PC-9 (cell line): ENCODE measurements at regions of chr11 and their contacts with region 1.

Region 1: DNA sequence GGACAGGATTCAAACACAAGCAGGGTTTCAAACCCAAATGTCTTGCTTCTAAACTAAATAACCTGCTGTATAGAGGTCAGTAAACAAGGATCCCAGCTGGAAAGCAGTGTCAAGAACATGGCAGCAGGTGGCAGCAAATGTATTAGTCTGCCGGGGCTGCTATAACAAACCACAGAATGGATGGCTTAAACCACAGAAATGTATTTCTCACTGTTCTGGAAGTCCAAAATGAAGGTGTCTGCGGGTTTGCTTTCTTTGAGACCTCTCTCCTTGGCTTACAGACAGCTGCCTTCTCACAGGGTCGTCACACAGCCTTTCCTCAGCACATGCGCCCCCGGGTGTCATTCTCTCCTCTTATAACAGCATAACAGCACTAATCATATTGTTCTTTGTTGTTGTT is 65.1 kb upstream of the LRRC55 start:
- DNase-seq: peak; percentile 34 to 65
- H3K4me3 ChIP-seq: no peak overlapping the region
- H3K27ac ChIP-seq: no peak overlapping the region
- H3K4me1 ChIP-seq: peaks cover 8% of the 10 kb centered on the region
- H3K27me3 ChIP-seq: no peaks in the 10 kb centered on the region
- CTCF ChIP-seq: peak; percentile 86

Region 2: GRCh38 chr11:56841210-56841810 is 275.3 kb before region 1 on chr11:
- CTCF ChIA-PET with region 1: no interaction called
- POLR2A ChIA-PET with region 1: no interaction called
- intact Hi-C with region 1: loop called (anchors 1 kb)
- DNase-seq: peak; percentile 52
- H3K4me3 ChIP-seq: no peak overlapping the region
- H3K27ac ChIP-seq: no peak overlapping the region
- H3K4me1 ChIP-seq: peaks cover 8% of the 10 kb centered on the region; the same call in 1 of the 2 replicates
- H3K27me3 ChIP-seq: no peaks in the 10 kb centered on the region
- CTCF ChIP-seq: peak; percentile 93

Region 3: DNA sequence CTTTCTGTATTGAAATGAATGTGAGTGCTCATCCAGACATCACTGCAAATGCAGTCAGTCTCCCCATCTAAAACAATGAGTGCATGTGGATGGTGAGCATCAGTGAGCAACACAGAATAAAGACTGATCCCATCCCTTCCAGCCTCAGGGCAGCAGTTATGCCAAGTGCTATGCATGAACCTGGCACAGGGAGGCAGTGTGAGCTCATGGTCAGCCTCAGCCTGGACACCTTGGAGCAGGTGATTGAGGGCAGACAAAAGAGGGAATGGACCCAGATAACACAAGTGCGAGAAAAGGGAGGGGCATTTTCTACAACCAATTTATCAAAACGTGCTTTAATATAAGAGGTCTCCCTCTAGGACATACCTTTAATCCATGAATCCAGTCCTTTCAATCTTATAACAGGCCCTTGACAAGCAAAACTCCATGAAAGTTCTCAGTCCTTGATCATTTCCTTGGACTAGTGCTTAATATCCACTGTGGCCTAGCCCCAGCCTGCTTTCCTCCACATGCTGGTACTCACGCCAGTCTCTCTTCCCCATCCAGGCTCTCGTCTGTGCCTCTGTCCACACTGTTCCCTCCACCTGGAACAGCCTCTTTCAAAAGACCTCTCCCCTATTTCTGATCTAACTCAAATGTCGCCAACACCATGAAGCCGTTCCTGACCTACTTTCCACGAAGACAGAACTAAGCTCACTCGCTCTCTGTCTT is 14.6 kb after region 1 on chr11:
- CTCF ChIA-PET with region 1: no interaction called
- POLR2A ChIA-PET with region 1: no interaction called
- intact Hi-C with region 1: no loop called
- DNase-seq: peak; percentile 16 to 45
- H3K4me3 ChIP-seq: no peak overlapping the region
- H3K27ac ChIP-seq: no peak overlapping the region
- H3K4me1 ChIP-seq: peaks cover 28% of the 10 kb centered on the region
- H3K27me3 ChIP-seq: no peaks in the 10 kb centered on the region
- CTCF ChIP-seq: peak; percentile 76

Region 4: GRCh38 chr11:57277845-57278709 is 161.4 kb after region 1 on chr11:
- CTCF ChIA-PET with region 1: no interaction called
- POLR2A ChIA-PET with region 1: no interaction called
- intact Hi-C with region 1: loop called (anchors 1 kb)
- DNase-seq: peak; percentile 78 to 94
- H3K4me3 ChIP-seq: peak overlapping the region; percentile 49
- H3K27ac ChIP-seq: peak overlapping the region; percentile 90
- H3K4me1 ChIP-seq: peaks cover 38% of the 10 kb centered on the region
- H3K27me3 ChIP-seq: no peaks in the 10 kb centered on the region
- CTCF ChIP-seq: peak; percentile 89

Region 5: DNA sequence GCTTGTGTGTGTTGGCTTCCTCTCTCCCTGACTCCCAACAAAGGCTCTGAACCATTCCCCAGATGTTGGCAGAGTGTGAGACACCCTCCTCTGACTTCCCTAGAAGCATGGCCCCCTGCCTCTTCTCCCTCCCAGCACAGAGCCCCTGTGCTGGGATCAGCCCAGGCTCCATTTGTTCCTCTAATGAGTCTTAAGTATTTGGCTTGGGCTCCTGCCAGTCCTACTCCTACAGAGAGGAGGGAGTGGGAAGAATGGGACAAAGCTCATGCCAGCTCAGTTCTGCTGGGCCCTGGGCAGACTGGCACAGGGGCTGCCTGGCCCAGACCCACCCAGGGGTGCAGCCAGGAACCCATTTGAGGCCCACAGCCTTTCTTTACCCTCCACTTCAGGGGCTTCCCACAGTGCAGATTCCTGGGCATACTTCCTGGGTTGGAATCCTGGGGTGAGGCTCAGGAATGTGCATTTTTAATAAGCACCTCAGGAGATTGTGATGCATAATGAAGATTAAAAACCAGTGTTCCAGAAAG is 178.0 kb after region 1 on chr11:
- CTCF ChIA-PET with region 1: no interaction called
- POLR2A ChIA-PET with region 1: no interaction called
- intact Hi-C with region 1: no loop called
- DNase-seq: peak; percentile 57 to 68
- H3K4me3 ChIP-seq: no peak overlapping the region
- H3K27ac ChIP-seq: peak overlapping the region; percentile 89
- H3K4me1 ChIP-seq: peaks cover 40% of the 10 kb centered on the region
- H3K27me3 ChIP-seq: no peaks in the 10 kb centered on the region
- CTCF ChIP-seq: no peak

Region 6: GRCh38 chr11:57311109-57311936 is 194.7 kb after region 1 on chr11:
- CTCF ChIA-PET with region 1: no interaction called
- POLR2A ChIA-PET with region 1: no interaction called
- intact Hi-C with region 1: loop called (anchors 1 kb)
- DNase-seq: peak; percentile 94 to 99
- H3K4me3 ChIP-seq: peak overlapping the region; percentile 57
- H3K27ac ChIP-seq: peak overlapping the region; percentile 67
- H3K4me1 ChIP-seq: peaks cover 54% of the 10 kb centered on the region
- H3K27me3 ChIP-seq: no peaks in the 10 kb centered on the region
- CTCF ChIP-seq: no peak

Region 7: DNA sequence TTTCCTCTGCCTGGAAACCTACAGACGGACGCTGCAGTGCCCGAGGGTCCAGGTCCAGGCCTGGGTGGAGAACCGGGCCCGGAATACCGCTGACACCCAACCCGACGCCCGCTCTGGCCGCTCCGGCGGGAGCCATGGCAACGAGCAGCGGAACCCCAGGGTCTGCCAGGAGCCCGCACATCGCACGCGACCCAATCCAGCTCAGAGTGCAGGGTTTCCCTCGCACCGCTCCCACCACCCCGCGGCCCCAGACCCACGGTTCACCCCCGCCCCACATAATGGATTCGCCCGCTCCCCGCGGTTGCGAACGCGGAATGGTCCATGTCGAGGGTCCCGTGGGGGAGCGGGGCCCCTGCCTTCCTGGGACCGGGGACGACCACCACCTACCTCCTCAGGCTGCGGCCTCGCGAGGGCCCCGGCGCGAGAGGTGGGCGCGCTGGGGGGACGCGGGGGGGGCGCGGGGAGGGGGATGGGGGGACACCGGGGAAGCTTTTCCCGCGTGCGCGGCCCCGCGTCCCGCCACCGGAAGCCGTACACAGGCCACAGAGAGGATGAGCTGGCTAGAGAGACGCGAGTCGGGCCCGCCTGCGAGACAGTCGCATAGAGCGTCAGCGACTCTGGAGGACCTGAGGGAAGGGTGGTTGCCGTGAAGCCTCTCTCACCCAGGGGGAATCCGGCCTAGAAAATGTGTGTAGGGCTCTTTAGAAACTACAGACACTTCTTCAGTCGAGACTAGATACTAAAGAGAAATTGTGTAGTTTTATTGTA is 218.9 kb after region 1 on chr11 and contains the start of gene SSRP1:
- CTCF ChIA-PET with region 1: no interaction called
- POLR2A ChIA-PET with region 1: no interaction called
- intact Hi-C with region 1: loop called (anchors 1 kb)
- DNase-seq: peak; percentile 82 to 85
- H3K4me3 ChIP-seq: peak within 1 kb of the TSS; percentile 70
- H3K27ac ChIP-seq: peak within 1 kb of the TSS; percentile 28; the same call in 1 of the 2 replicates
- H3K4me1 ChIP-seq: peaks cover 31% of the 10 kb centered on the region
- H3K27me3 ChIP-seq: no peaks in the 10 kb centered on the region
- CTCF ChIP-seq: no peak
- total RNA-seq, gene SSRP1: 286 and 290 TPM in 2 replicates